ENCODE measurements at regions of chr13 and their contacts with region 1.

Region 1: DNA sequence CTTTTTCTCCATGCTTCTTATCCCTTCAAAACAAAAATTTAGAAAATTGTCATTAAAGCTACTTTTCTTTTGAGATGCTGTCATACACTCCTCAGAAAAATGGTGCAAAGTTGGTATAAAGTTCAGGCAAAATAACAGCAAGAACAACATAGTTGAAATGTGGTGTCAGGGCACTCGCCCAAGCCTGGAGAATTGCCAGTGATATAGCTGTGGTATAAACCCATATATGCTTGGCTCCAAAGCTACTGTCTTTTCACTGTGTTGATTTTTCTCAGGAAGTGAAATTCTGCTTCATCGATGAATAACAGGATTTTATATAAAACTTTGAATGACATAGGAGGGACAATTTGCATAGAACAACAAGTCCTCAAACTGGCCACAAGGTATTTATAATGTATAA is 2532.9 kb downstream of the PCDH9 start:
- DNase-seq: peak; percentile 61
- ATAC-seq: peak; percentile 50
- H3K4me3 ChIP-seq: no peak overlapping the region
- H3K27ac ChIP-seq: no peak overlapping the region
- H3K4me1 ChIP-seq: peaks cover 4% of the 10 kb centered on the region; the same call in 1 of the 2 replicates
- H3K27me3 ChIP-seq: no peaks in the 10 kb centered on the region
- CTCF ChIP-seq: no peak

Region 2: GRCh38 chr13:64505336-64505910 is 191.8 kb before region 1 on chr13:
- CTCF ChIA-PET with region 1: no interaction called
- POLR2A ChIA-PET with region 1: no interaction called
- intact Hi-C with region 1: no loop called
- DNase-seq: peak; percentile 27
- ATAC-seq: no peak
- H3K4me3 ChIP-seq: no peak overlapping the region
- H3K27ac ChIP-seq: no peak overlapping the region
- H3K4me1 ChIP-seq: no peaks in the 10 kb centered on the region
- H3K27me3 ChIP-seq: no peaks in the 10 kb centered on the region
- CTCF ChIP-seq: no peak

Region 3: GRCh38 chr13:64778002-64778401 is 80.8 kb after region 1 on chr13:
- CTCF ChIA-PET with region 1: no interaction called
- POLR2A ChIA-PET with region 1: no interaction called
- intact Hi-C with region 1: loop called (anchors 10 kb)
- DNase-seq: no peak
- ATAC-seq: no peak
- H3K4me3 ChIP-seq: no peak overlapping the region
- H3K27ac ChIP-seq: no peak overlapping the region
- H3K4me1 ChIP-seq: peaks cover 7% of the 10 kb centered on the region
- H3K27me3 ChIP-seq: no peaks in the 10 kb centered on the region
- CTCF ChIP-seq: no peak